Caco-2 (cell line): ENCODE measurements at regions of chr2 and their contacts with region 1.

Region 1: GRCh38 chr2:182980115-182980514 is 58.1 kb downstream of the NCKAP1 start:
- DNase-seq: no peak
- H3K4me3 ChIP-seq: no peak overlapping the region
- H3K4me3 Mint-ChIP-seq: no peak overlapping the region
- H3K27ac Mint-ChIP-seq: no peak overlapping the region
- H3K4me1 ChIP-seq: no peaks in the 10 kb centered on the region
- H3K4me1 Mint-ChIP-seq: no peaks in the 10 kb centered on the region
- H3K27me3 ChIP-seq: no peaks in the 10 kb centered on the region
- H3K27me3 Mint-ChIP-seq: no peaks in the 10 kb centered on the region
- CTCF ChIP-seq: peak; percentile 40 to 51

Region 2: DNA sequence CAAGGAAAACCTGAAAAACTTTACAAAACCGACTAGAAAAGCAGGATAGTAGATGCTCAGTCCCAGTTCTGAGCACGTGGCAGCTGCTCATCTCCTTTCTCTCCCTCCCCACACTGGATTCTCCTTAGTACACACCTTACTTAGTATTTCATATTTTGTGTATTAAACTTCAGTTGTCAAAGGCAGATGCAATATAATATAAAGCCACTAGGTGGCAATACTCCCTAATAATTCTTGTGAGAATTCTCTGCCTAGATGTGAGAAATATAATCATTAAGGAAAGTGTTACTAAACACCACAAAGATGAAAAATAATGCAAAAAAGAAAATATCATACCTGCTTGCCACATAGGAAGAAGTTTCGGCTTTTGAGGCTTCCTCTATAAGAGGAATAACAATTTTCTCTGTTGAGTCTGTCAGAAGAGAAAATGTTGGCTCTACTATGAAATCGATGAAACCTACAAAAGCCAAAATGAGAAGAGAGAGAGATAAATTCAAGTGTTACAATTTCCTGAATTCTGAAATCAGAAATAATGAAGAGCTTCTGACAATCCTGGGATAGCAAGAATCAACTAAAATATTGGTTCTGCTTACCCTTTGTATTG is 793.9 kb before region 1 on chr2:
- CTCF ChIA-PET with region 1: no interaction called
- POLR2A ChIA-PET with region 1: no interaction called
- intact Hi-C with region 1: loop called (anchors 10 kb)
- DNase-seq: peak in 1 of 2 experiments; percentile 52
- H3K4me3 ChIP-seq: no peak overlapping the region
- H3K4me3 Mint-ChIP-seq: no peak overlapping the region
- H3K27ac Mint-ChIP-seq: no peak overlapping the region
- H3K4me1 ChIP-seq: no peaks in the 10 kb centered on the region
- H3K4me1 Mint-ChIP-seq: no peaks in the 10 kb centered on the region
- H3K27me3 ChIP-seq: no peaks in the 10 kb centered on the region
- H3K27me3 Mint-ChIP-seq: no peaks in the 10 kb centered on the region
- CTCF ChIP-seq: peak; percentile 46 to 68

Region 3: DNA sequence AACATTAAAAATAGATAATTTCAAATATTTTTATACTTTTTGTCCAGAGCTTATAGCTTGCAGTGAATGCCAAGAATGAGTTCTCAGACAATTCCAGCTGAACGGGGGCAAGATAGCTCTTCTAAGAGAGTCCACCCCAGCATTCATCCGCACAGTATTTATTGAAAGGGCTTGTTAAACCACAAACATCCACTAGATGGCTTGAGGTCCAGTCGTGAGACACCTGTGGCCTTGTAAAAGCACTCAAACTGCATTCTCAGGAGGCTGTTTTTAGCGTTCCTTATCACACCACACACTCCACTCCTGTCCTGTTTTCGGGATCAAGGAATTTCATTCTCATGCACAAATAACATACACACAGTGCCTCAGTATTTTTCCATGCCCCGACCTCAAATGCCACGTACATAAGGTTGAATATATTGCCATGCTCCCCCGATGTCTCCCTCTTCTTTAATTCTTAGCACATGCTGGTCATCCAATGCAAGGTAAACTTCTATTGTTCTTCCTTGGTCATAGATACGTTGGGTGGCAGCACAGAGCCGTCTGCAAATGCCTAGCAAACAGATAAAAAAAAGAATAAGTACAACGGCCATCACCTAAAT is 216.7 kb before region 1 on chr2:
- CTCF ChIA-PET with region 1: interaction called, 20 read pairs
- POLR2A ChIA-PET with region 1: interaction called, 3 read pairs
- intact Hi-C with region 1: loop called (anchors 2 kb)
- DNase-seq: peak in 1 of 2 experiments; percentile 59
- H3K4me3 ChIP-seq: no peak overlapping the region
- H3K4me3 Mint-ChIP-seq: no peak overlapping the region
- H3K27ac Mint-ChIP-seq: no peak overlapping the region
- H3K4me1 ChIP-seq: no peaks in the 10 kb centered on the region
- H3K4me1 Mint-ChIP-seq: no peaks in the 10 kb centered on the region
- H3K27me3 ChIP-seq: no peaks in the 10 kb centered on the region
- H3K27me3 Mint-ChIP-seq: no peaks in the 10 kb centered on the region
- CTCF ChIP-seq: peak; percentile 64 to 71

Region 4: DNA sequence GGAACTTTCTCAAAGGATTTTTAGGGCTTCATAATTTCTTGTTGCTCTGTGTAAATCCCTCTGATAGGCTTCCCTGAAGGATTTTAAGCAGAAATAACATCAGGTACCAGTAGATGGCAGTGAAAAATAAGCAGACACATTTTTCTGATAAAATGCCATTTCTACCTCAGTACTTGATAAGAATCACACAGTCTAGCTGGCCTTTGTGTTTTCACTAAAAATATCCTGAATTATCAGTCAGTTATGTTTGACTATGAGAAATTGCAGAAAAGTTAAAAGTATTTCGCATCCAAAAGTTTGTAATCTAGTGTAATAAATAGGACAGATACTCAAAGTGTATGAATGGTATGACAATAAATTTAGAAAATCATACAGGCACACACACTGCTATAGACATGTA is 195.3 kb before region 1 on chr2:
- CTCF ChIA-PET with region 1: interaction called, 3 read pairs
- POLR2A ChIA-PET with region 1: no interaction called
- intact Hi-C with region 1: loop called (anchors 1 kb)
- DNase-seq: peak in 1 of 2 experiments; percentile 48
- H3K4me3 ChIP-seq: no peak overlapping the region
- H3K4me3 Mint-ChIP-seq: no peak overlapping the region
- H3K27ac Mint-ChIP-seq: no peak overlapping the region
- H3K4me1 ChIP-seq: no peaks in the 10 kb centered on the region
- H3K4me1 Mint-ChIP-seq: no peaks in the 10 kb centered on the region
- H3K27me3 ChIP-seq: no peaks in the 10 kb centered on the region
- H3K27me3 Mint-ChIP-seq: no peaks in the 10 kb centered on the region
- CTCF ChIP-seq: peak; percentile 70 to 73

Region 5: GRCh38 chr2:183010112-183010511 is 30.0 kb after region 1 on chr2:
- CTCF ChIA-PET with region 1: no interaction called
- POLR2A ChIA-PET with region 1: no interaction called
- intact Hi-C with region 1: no loop called
- DNase-seq: no peak
- H3K4me3 ChIP-seq: no peak overlapping the region
- H3K4me3 Mint-ChIP-seq: no peak overlapping the region
- H3K27ac Mint-ChIP-seq: no peak overlapping the region
- H3K4me1 ChIP-seq: peaks cover 13% of the 10 kb centered on the region
- H3K4me1 Mint-ChIP-seq: peaks cover 17% of the 10 kb centered on the region
- H3K27me3 ChIP-seq: no peaks in the 10 kb centered on the region
- H3K27me3 Mint-ChIP-seq: no peaks in the 10 kb centered on the region
- CTCF ChIP-seq: no peak

Region 6: DNA sequence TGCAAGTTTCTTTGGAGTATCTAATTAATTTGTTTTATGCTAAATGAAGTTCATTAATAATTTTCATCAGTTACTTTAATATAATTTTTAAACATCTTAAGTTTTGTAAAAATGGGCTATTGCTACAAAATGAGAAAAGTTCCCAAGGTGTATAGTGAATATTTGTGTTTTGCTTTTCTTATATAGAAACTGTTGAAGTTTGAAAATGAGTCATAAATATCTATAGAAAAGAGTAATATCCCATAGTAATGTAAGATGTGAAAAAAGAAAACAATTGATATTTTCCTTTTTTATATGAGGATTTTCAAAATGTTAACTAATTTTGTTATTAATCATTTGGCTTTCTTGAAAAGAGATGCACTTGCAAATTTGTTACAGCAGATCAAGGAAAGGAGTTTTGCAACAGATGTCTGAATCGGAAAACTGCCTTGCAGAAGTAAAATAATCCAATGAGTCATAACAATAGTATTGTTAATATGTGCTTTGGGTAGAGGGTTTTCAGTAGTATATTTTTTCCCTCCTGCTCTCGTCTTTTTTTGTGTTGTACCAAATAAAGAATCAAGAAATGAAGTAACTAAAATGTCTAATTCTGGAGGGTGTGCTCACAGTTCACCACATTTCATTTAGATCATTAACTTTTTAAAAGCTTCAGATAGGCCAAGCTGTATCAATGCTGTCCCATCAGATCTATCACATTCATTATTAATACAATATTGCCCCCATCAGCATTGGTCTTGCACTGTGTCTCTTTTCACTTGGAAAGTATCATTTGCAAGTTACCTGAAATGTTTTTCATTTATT is 113.9 kb after region 1 on chr2:
- CTCF ChIA-PET with region 1: no interaction called
- POLR2A ChIA-PET with region 1: no interaction called
- intact Hi-C with region 1: loop called (anchors 5 kb)
- DNase-seq: peak in 1 of 2 experiments; percentile 14
- H3K4me3 ChIP-seq: no peak overlapping the region
- H3K4me3 Mint-ChIP-seq: no peak overlapping the region
- H3K27ac Mint-ChIP-seq: no peak overlapping the region
- H3K4me1 ChIP-seq: peaks cover 11% of the 10 kb centered on the region
- H3K4me1 Mint-ChIP-seq: peaks cover 6% of the 10 kb centered on the region
- H3K27me3 ChIP-seq: no peaks in the 10 kb centered on the region
- H3K27me3 Mint-ChIP-seq: no peaks in the 10 kb centered on the region
- CTCF ChIP-seq: peak in 1 of 2 experiments; percentile 12

Region 7: GRCh38 chr2:183124222-183124956 is 144.3 kb after region 1 on chr2 and contains the start of gene NUP35:
- CTCF ChIA-PET with region 1: no interaction called
- POLR2A ChIA-PET with region 1: no interaction called
- intact Hi-C with region 1: loop called (anchors 5 kb)
- DNase-seq: peak; percentile 91 to 92
- H3K4me3 ChIP-seq: peak within 1 kb of the TSS; percentile 73
- H3K4me3 Mint-ChIP-seq: peak within 1 kb of the TSS; percentile 96
- H3K27ac Mint-ChIP-seq: peak within 1 kb of the TSS; percentile 98
- H3K4me1 ChIP-seq: 0 out of 2 replicates have a peak, but pooled peaks cover 5% of the 10 kb centered on the region
- H3K4me1 Mint-ChIP-seq: peaks cover 14% of the 10 kb centered on the region
- H3K27me3 ChIP-seq: no peaks in the 10 kb centered on the region
- H3K27me3 Mint-ChIP-seq: no peaks in the 10 kb centered on the region
- CTCF ChIP-seq: no peak
- total RNA-seq, gene NUP35: 34.7 and 36.1 TPM in 2 replicates